Activated T-helper 1 cell treated with anti-CD3 and anti-CD28 coated beads, Interleukin-12 subunit alpha, Interleukin-12 subunit beta, Interleukin-2, Interleukin-4 antibody, amounts not matched to agents 30 ng/mL and 10 ng/mL and 1 ng/mL, durations not matched to agents 14 hours and 24 hours and 36 hours (primary cell): ENCODE measurements at regions of chr1 and their contacts with region 1.

Region 1: GRCh38 chr1:45037456-45037855 is 25.4 kb downstream of the UROD start:
- DNase-seq: no peak
- H3K4me3 Mint-ChIP-seq: no peak overlapping the region
- H3K27ac Mint-ChIP-seq: no peak overlapping the region
- H3K4me1 Mint-ChIP-seq: peaks cover 10% of the 10 kb centered on the region
- H3K27me3 Mint-ChIP-seq: no peaks in the 10 kb centered on the region

Region 2: DNA sequence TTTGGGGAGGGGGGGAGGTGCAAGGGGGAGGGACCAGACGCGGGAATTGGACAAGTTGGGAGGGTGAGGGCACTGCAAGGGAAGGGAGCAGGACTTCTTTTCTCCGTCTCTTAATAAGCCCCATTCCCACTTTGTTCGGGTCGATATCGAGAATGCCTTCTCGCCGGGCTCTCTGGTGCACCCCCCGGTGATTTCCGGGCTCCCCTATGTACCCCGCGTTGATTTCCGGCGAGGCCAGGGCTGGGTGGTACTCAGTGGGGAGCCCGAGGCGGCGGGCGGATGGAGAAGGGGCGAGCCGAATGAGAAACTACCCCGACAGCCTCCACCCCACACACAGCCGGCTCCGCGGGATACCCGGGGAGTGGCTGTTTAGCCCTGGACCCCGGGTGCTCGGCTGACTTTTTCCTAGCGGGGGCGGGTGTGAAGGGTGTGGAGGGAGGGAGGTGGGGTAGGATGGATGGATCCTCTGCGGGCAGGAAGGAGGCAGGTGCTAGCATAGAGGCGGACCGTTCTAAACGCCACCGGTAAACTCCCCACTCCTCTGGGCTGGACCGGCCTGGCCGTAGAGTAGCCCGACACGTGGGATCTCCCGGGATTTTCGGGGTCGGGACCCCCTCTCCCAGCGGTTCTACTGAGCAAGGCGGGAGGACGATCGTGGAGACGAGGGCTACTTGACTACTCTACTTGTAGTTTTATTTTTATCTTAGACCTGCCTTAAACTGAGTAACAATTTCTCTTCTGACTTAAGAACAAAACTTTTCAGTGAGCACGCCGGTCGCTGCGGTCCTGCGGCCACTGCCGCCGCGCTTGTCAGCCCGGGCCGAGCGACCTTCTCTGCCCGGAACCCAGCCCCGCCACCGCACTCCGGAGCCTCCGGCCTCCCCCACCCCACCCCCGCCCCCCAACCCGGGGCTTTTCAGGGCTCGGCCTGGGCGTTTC is 631.4 kb before region 1 on chr1:
- intact Hi-C with region 1: no loop called
- DNase-seq: no peak
- H3K4me3 Mint-ChIP-seq: peak overlapping the region; percentile 86
- H3K27ac Mint-ChIP-seq: peak overlapping the region; percentile 25
- H3K4me1 Mint-ChIP-seq: peaks cover 21% of the 10 kb centered on the region
- H3K27me3 Mint-ChIP-seq: peaks cover 44% of the 10 kb centered on the region

Region 3: GRCh38 chr1:45051005-45051772 is 13.7 kb after region 1 on chr1:
- intact Hi-C with region 1: loop called (anchors 1 kb)
- DNase-seq: no peak
- H3K4me3 Mint-ChIP-seq: peak overlapping the region; percentile 34
- H3K27ac Mint-ChIP-seq: no peak overlapping the region
- H3K4me1 Mint-ChIP-seq: peaks cover 13% of the 10 kb centered on the region
- H3K27me3 Mint-ChIP-seq: peaks cover 9% of the 10 kb centered on the region

Region 4: DNA sequence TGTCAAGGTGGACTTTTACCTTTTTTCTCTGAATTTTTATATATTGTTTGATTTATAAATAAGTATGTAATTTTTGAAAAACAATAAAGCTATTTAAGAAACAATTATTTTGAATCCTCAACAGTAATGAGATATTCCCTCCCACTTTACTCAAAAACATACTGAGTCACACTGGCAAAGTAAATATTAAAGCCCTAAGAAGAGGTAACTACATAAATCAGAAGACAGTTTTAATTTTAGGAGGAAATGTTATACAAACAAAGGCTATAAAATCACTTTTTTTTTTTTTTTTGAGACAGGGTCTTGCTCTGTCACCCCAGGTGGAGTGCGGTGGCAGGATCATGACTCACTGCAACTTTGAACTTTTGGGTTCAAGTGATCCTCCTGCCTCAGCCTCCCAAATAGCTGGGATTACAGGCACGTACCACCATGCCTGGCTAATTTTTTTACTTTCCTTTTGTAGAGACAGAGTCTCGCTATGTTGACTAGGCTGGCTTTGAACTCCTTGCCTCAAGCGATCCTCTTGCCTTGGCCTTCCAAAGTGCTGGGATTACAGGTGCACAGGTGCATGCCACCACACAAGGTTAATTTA is 132.8 kb after region 1 on chr1:
- intact Hi-C with region 1: no loop called
- DNase-seq: no peak
- H3K4me3 Mint-ChIP-seq: no peak overlapping the region
- H3K27ac Mint-ChIP-seq: no peak overlapping the region
- H3K4me1 Mint-ChIP-seq: no peaks in the 10 kb centered on the region
- H3K27me3 Mint-ChIP-seq: peaks cover 6% of the 10 kb centered on the region